IMR-90 (cell line): ENCODE measurements at regions of chr13 and their contacts with region 1.

Region 1: GRCh38 chr13:39415008-39415802 is 187.8 kb downstream of the LHFPL6 start:
- DNase-seq: peak; percentile 43
- ATAC-seq: no peak; the same call in 1 of the 2 replicates
- H3K4me3 ChIP-seq: no peak overlapping the region
- H3K27ac ChIP-seq: no peak overlapping the region
- H3K4me1 ChIP-seq: peaks cover 2% of the 10 kb centered on the region; the same call in 1 of the 2 replicates
- H3K27me3 ChIP-seq: no peaks in the 10 kb centered on the region
- CTCF ChIP-seq: peak; percentile 53
- POLR2A ChIP-seq: no peak
- RAD21 ChIP-seq: peak; percentile 67

Region 2: DNA sequence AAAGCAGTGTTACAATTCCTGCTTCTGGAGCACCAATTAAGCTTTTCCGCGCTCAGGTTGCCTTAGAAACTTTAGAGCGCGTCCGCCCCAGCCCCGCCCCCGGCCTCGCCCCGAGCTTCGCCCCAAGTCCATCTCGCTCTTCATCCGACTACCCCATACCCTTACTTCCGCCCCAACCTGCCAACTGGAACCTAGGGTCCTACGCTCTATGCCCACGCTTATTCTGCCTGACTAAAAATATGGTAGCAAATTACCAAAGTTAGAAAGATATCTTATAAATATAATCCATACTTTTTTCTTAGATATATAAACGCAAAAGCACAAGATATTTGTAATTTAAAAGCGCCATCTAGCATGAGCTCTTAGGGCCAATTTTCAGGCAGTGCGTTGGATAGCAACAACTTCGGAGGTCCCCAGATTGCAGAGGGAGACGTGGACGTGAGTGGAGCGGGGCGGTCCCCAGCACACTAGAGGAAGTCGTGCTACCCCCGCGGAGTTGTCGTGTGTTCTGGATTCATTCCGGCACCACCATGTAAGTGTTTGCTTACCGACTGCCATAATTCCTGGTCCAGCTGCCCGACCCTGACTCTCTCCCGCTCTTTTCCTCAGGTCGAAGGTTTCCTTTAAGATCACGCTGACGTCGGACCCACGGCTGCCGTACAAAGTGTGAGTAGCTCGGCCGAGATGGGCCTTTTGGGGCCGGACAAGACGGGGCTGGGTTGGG is 1065.7 kb before region 1 on chr13 and contains the start of gene UFM1:
- CTCF ChIA-PET with region 1: no interaction called
- POLR2A ChIA-PET with region 1: no interaction called
- dilution Hi-C with region 1: no loop called
- in situ Hi-C with region 1: no loop called
- intact Hi-C with region 1: no loop called
- DNase-seq: peak; percentile 96
- ATAC-seq: peak; percentile 98
- H3K4me3 ChIP-seq: peak within 1 kb of the TSS; percentile 70
- H3K27ac ChIP-seq: peak within 1 kb of the TSS; percentile 89
- H3K4me1 ChIP-seq: peaks cover 2% of the 10 kb centered on the region
- H3K27me3 ChIP-seq: no peaks in the 10 kb centered on the region
- CTCF ChIP-seq: no peak
- POLR2A ChIP-seq: peak; percentile 95
- RAD21 ChIP-seq: no peak
- total RNA-seq, gene UFM1: 94.5 and 127 TPM in 2 replicates

Region 3: GRCh38 chr13:39037880-39038568 is 377.2 kb before region 1 on chr13 and contains the starts of genes NHLRC3 and PROSER1:
- CTCF ChIA-PET with region 1: no interaction called
- POLR2A ChIA-PET with region 1: no interaction called
- dilution Hi-C with region 1: no loop called
- in situ Hi-C with region 1: no loop called
- intact Hi-C with region 1: loop called (anchors 10 kb)
- DNase-seq: peak; percentile 88
- ATAC-seq: peak; percentile 92
- H3K4me3 ChIP-seq: peak within 1 kb of the TSS; percentile 85
- H3K27ac ChIP-seq: peak within 1 kb of the TSS; percentile 77
- H3K4me1 ChIP-seq: peaks cover 2% of the 10 kb centered on the region; the same call in 1 of the 2 replicates
- H3K27me3 ChIP-seq: no peaks in the 10 kb centered on the region
- CTCF ChIP-seq: no peak
- POLR2A ChIP-seq: peak; percentile 75; the same call in 1 of the 2 replicates
- RAD21 ChIP-seq: no peak
- total RNA-seq, gene NHLRC3: 3.0 and 5.6 TPM in 2 replicates
- total RNA-seq, gene PROSER1: 2.0 and 4.2 TPM in 2 replicates

Region 4: DNA sequence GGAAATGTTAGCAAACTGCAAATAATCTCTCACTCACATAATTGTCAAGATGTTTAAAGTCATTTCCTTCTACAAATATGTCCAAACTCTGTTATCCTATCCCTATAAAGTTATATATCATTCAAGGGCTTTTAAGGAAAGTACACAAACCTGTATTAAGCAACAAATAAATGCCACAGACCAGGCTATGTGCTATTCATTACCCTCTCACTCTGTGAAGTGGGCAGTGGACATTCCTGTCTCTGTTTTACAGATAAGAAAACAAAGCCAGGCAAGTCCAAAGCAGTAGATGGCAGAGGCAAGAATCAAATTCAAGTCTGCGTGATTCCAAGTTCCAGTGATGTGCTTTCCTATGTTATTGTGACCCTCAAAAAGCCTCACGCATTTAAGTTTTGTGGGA is 47.2 kb after region 1 on chr13:
- CTCF ChIA-PET with region 1: no interaction called
- POLR2A ChIA-PET with region 1: no interaction called
- dilution Hi-C with region 1: no loop called
- in situ Hi-C with region 1: no loop called
- intact Hi-C with region 1: no loop called
- DNase-seq: no peak
- ATAC-seq: peak; percentile 55
- H3K4me3 ChIP-seq: no peak overlapping the region
- H3K27ac ChIP-seq: peak overlapping the region; percentile 72; the same call in 1 of the 2 replicates
- H3K4me1 ChIP-seq: peaks cover 8% of the 10 kb centered on the region
- H3K27me3 ChIP-seq: no peaks in the 10 kb centered on the region
- CTCF ChIP-seq: no peak
- POLR2A ChIP-seq: no peak
- RAD21 ChIP-seq: no peak